BJ (cell line): ENCODE measurements at regions of chr4 and their contacts with region 1.

Region 1: GRCh38 chr4:88533937-88534750 is 10.6 kb upstream of the PYURF start:
- DNase-seq: peak; percentile 69
- H3K4me3 ChIP-seq: no peak overlapping the region
- H3K27me3 ChIP-seq: no peaks in the 10 kb centered on the region
- CTCF ChIP-seq: no peak

Region 2: GRCh38 chr4:88517825-88518224 is 16.3 kb before region 1 on chr4:
- CTCF ChIA-PET with region 1: no interaction called
- POLR2A ChIA-PET with region 1: no interaction called
- DNase-seq: no peak
- H3K4me3 ChIP-seq: no peak overlapping the region
- H3K27me3 ChIP-seq: no peaks in the 10 kb centered on the region
- CTCF ChIP-seq: no peak

Region 3: GRCh38 chr4:88616275-88617150 is 82.4 kb after region 1 on chr4:
- CTCF ChIA-PET with region 1: interaction called, 14 read pairs
- POLR2A ChIA-PET with region 1: no interaction called
- DNase-seq: peak; percentile 78
- H3K4me3 ChIP-seq: no peak overlapping the region
- H3K27me3 ChIP-seq: no peaks in the 10 kb centered on the region
- CTCF ChIP-seq: no peak

Region 4: GRCh38 chr4:88646528-88647280 is 112.6 kb after region 1 on chr4:
- CTCF ChIA-PET with region 1: interaction called, 12 read pairs
- POLR2A ChIA-PET with region 1: no interaction called
- DNase-seq: no peak
- H3K4me3 ChIP-seq: no peak overlapping the region
- H3K27me3 ChIP-seq: no peaks in the 10 kb centered on the region
- CTCF ChIP-seq: no peak

Region 5: GRCh38 chr4:88659055-88659889 is 125.1 kb after region 1 on chr4:
- CTCF ChIA-PET with region 1: interaction called, 17 read pairs
- POLR2A ChIA-PET with region 1: no interaction called
- DNase-seq: no peak
- H3K4me3 ChIP-seq: no peak overlapping the region
- H3K27me3 ChIP-seq: no peaks in the 10 kb centered on the region
- CTCF ChIP-seq: peak; percentile 64

Region 6: DNA sequence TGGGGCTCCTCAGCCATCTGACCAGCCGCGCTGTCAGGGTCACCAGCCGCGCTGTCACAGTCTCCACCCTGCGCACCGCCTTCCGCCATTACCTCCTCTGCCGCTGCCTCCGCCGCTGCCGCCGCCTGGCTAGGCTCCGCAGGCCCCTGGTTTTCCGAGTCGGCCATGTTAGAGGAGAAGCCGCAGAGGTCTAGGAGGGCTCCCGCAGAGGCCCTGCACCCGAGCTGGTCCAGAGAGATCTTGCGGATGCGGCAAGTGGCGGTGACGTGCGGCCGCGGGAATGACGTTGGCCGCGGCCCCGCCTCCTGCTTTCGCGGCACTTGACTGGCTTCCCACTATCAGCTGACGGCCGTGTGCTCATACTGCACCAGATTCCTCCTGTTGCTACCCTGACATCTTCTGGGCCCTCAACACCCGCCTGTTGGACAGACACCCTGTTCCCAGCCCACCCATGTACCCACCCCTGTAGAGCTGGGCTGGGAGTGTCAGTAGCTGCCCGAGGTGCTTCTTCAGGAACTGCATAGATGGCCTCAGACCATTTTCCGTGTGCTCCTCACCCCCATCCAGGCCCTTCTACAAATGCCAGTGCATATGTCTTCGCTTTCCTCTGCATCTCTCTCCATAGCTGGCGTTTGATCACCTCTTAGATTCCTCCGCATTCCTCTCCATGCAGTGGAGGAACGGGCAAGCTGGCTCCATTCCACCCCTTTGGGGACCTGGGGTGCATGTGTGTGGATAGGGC is 163.6 kb after region 1 on chr4 and contains the start of gene NAP1L5:
- CTCF ChIA-PET with region 1: interaction called, 10 read pairs
- POLR2A ChIA-PET with region 1: no interaction called
- DNase-seq: no peak
- H3K4me3 ChIP-seq: peak within 1 kb of the TSS; percentile 68
- H3K27me3 ChIP-seq: no peaks in the 10 kb centered on the region
- CTCF ChIP-seq: no peak
- polyA plus RNA-seq, gene NAP1L5: 2.2 and 5.3 TPM in 2 replicates

Region 7: DNA sequence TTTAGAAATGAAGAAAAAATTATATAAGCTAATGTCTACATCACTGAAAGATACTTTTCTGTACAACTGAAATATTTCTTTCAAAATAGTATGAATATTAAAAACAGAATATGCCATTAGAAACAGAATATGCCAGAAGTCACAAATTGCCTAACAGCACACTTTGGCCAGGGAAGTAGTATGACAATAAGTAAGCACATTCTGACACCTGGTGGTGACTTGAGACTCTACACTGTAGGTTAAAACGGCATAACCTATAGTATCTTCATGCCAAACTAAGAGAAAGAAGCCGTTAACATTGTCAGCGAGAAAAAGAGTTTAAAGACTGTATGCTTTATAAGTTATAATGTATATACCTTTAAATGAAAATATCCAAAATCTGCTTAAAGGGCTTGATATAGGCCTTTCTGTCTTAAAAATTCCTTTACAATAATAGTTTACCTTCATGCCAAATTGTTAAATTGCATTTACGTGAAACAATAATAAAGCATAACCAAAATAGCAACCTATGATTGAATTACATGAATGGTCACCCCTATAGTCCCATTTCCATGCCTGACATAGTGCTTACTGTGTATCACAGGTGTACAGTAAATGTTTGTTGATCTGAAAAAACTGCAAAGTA is 490.0 kb after region 1 on chr4:
- CTCF ChIA-PET with region 1: interaction called, 19 read pairs
- POLR2A ChIA-PET with region 1: no interaction called
- DNase-seq: peak; percentile 4
- H3K4me3 ChIP-seq: no peak overlapping the region
- H3K27me3 ChIP-seq: no peaks in the 10 kb centered on the region
- CTCF ChIP-seq: peak; percentile 64